SK-N-SH (cell line): ENCODE measurements at regions of chr1 and their contacts with region 1.

Region 1: DNA sequence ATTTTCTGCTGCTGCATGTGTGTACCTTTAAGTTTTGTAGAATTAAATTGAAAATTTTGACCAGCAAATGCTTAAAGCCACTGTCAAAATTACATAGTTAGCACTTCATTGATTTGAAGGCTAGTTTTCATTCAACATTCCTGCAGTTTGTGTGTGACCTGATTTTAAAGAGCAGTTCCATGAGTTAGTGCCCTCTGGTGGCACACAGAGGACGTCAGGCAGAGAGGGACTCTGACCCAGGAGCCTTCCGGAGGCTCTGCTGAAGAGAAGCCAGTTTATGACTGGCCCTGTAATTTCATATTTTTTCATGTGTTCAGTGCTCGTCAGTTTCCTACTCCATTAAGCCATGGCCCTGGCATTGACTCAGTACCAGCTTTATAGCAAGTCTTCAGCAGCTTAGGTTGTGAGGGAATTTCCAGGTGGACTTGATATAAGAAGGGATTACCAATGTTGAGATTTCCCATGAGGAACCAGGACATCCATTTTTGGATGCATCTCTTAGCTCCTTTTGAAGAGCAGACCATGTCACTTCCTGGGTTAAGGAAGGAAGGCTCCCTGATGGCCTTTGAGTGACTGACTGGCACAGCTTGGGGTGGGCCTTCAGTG is 104.7 kb downstream of the CAMTA1 start:
- DNase-seq: peak; percentile 69
- H3K4me3 ChIP-seq: peak overlapping the region in 1 of 2 experiments; percentile 48; a peak in 1 of 4 replicates
- H3K27ac ChIP-seq: no peak overlapping the region
- H3K4me1 ChIP-seq: peaks cover 0 to 4% of the 10 kb centered on the region in 2 experiments; a peak in 2 of 4 replicates
- H3K27me3 ChIP-seq: no peaks in the 10 kb centered on the region
- CTCF ChIP-seq: peak; percentile 78
- EP300 ChIP-seq: no peak
- RAD21 ChIP-seq: peak; percentile 71

Region 2: GRCh38 chr1:6872573-6873261 is 17.3 kb before region 1 on chr1:
- CTCF ChIA-PET with region 1: interaction called, 15 read pairs
- POLR2A ChIA-PET with region 1: no interaction called
- DNase-seq: no peak
- H3K4me3 ChIP-seq: no peak overlapping the region
- H3K27ac ChIP-seq: no peak overlapping the region
- H3K4me1 ChIP-seq: peaks cover 12 to 21% of the 10 kb centered on the region in 2 experiments
- H3K27me3 ChIP-seq: no peaks in the 10 kb centered on the region
- CTCF ChIP-seq: no peak
- EP300 ChIP-seq: no peak
- RAD21 ChIP-seq: no peak

Region 3: DNA sequence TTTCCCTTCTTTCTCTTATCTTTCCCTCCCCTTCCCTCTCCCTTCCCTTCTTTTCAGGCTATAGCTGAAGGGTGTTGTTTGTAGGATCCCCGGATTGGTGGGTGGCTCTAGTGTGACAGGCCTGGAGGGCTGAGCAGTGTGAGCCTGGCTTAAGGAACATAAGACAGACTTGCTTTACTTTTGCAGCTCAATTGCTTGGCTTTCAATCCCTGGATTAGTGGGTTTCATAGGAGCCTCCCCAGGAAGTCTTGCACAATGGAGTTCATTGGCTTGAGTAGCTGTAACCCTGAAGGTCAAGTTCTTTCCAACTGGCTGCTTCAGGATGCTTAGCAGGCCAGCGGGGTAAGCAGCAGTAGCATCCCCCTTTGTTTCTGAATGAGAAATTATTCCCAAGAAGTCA is 22.0 kb after region 1 on chr1:
- CTCF ChIA-PET with region 1: interaction called, 11 read pairs
- POLR2A ChIA-PET with region 1: no interaction called
- DNase-seq: no peak
- H3K4me3 ChIP-seq: no peak overlapping the region
- H3K27ac ChIP-seq: no peak overlapping the region
- H3K4me1 ChIP-seq: peaks cover 0 to 6% of the 10 kb centered on the region in 2 experiments; a peak in 1 of 4 replicates
- H3K27me3 ChIP-seq: no peaks in the 10 kb centered on the region
- CTCF ChIP-seq: no peak
- EP300 ChIP-seq: no peak
- RAD21 ChIP-seq: no peak

Region 4: GRCh38 chr1:6948861-6949260 is 58.9 kb after region 1 on chr1:
- CTCF ChIA-PET with region 1: no interaction called
- POLR2A ChIA-PET with region 1: no interaction called
- DNase-seq: no peak
- H3K4me3 ChIP-seq: no peak overlapping the region
- H3K27ac ChIP-seq: no peak overlapping the region
- H3K4me1 ChIP-seq: peaks cover 0 to 20% of the 10 kb centered on the region in 2 experiments; a peak in 1 of 4 replicates
- H3K27me3 ChIP-seq: no peaks in the 10 kb centered on the region
- CTCF ChIP-seq: no peak
- EP300 ChIP-seq: no peak
- RAD21 ChIP-seq: no peak

Region 5: DNA sequence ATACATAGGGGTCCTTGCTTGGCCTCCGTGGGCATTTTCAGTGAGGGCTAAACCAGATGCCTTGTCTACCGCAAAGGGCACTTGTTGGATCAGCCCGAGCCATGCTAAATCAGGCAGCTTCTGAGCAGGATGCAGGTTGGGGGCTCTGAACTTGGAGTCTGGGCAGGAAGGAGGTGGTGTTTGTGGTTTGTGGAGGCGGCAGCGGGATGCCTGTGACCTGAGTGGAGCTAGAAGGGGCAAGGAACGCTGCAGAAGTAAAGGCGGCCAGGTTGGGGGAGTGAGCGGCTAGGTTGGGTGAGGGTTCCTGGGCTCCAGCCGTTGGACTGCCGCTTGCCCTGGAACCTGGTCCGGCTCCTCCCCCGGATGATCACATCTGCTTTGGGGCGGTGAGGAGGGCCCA is 79.1 kb after region 1 on chr1:
- CTCF ChIA-PET with region 1: no interaction called
- POLR2A ChIA-PET with region 1: no interaction called
- DNase-seq: peak; percentile 11
- H3K4me3 ChIP-seq: no peak overlapping the region
- H3K27ac ChIP-seq: no peak overlapping the region
- H3K4me1 ChIP-seq: peaks cover 0 to 14% of the 10 kb centered on the region in 2 experiments; a peak in 1 of 4 replicates
- H3K27me3 ChIP-seq: no peaks in the 10 kb centered on the region
- CTCF ChIP-seq: no peak
- EP300 ChIP-seq: no peak
- RAD21 ChIP-seq: no peak

Region 6: GRCh38 chr1:7026169-7026568 is 136.2 kb after region 1 on chr1:
- CTCF ChIA-PET with region 1: no interaction called
- POLR2A ChIA-PET with region 1: no interaction called
- DNase-seq: no peak
- H3K4me3 ChIP-seq: no peak overlapping the region
- H3K27ac ChIP-seq: no peak overlapping the region
- H3K4me1 ChIP-seq: no peaks in the 10 kb centered on the region
- H3K27me3 ChIP-seq: no peaks in the 10 kb centered on the region
- CTCF ChIP-seq: no peak
- EP300 ChIP-seq: no peak
- RAD21 ChIP-seq: no peak

Region 7: DNA sequence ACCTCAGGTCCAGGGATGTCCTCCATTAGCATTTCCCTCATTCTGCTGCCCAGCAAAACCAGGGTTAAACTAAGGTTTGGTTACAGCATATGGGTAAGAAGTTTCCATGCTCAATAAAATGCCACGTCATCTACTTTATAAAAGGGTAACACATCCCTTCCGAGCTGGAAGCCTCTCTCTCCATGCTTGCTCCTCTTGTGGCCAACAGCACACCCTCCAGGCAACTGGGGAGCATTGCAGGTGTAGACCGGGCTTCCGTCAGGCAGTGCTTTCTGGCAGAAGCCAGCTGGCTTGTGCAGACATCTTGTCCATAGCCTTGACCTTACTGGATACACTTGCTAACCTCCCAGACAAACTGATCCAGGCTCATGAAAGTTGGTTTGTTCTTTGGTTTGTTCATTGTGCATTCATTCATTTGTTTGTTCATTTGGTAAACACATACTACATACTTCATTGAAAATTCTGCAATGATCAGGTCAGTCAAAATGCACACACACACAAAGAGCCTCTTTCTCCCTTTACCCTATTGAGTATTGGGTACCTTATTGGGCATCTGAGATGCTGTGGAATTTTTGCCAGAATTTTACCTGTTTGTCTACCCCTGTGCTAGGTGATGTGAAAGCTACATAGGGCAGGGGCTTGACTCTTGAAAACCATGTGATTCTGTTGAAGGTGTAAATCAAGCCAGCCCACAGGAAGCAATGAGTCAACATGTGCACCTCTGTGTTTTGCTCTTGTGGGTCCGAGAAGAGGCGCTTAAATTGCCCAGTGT is 318.1 kb after region 1 on chr1:
- CTCF ChIA-PET with region 1: interaction called, 11 read pairs
- POLR2A ChIA-PET with region 1: no interaction called
- DNase-seq: peak; percentile 73
- H3K4me3 ChIP-seq: no peak overlapping the region; a peak in 1 of 4 replicates
- H3K27ac ChIP-seq: no peak overlapping the region
- H3K4me1 ChIP-seq: peaks cover 0 to 8% of the 10 kb centered on the region in 2 experiments; a peak in 2 of 4 replicates
- H3K27me3 ChIP-seq: no peaks in the 10 kb centered on the region
- CTCF ChIP-seq: peak; percentile 55
- EP300 ChIP-seq: no peak
- RAD21 ChIP-seq: peak; percentile 85